Ovary (tissue), 10 donors: ENCODE measurements at regions of chr10 and their contacts with region 1.

Region 1: GRCh38 chr10:16828114-16828568 is 10.9 kb upstream of the RSU1 start:
- DNase-seq: peak; percentile 54 to 73 (median 62)
- H3K4me3 ChIP-seq: no peak overlapping the region
- H3K27ac ChIP-seq: no peak overlapping the region
- H3K4me1 ChIP-seq: peaks cover 4% of the 10 kb centered on the region
- H3K27me3 ChIP-seq: no peaks in the 10 kb centered on the region
- CTCF ChIP-seq: peak; percentile 35 to 61 (median 44)
- EP300 ChIP-seq: no peak
- POLR2A ChIP-seq: no peak

Region 2: GRCh38 chr10:17249820-17250219 is 421.7 kb after region 1 on chr10:
- intact Hi-C with region 1: loop called (anchors 5 kb)
- DNase-seq: no peak
- H3K4me3 ChIP-seq: no peak overlapping the region
- H3K27ac ChIP-seq: no peak overlapping the region
- H3K4me1 ChIP-seq: no peaks in the 10 kb centered on the region
- H3K27me3 ChIP-seq: no peaks in the 10 kb centered on the region
- CTCF ChIP-seq: peak in 1 of 3 donors; percentile 20
- EP300 ChIP-seq: no peak
- POLR2A ChIP-seq: no peak

Region 3: GRCh38 chr10:17257466-17258321 is 429.6 kb after region 1 on chr10:
- intact Hi-C with region 1: loop called (anchors 5 kb)
- DNase-seq: peak in 4 of 5 donors; percentile 40 to 74 (median 46)
- H3K4me3 ChIP-seq: no peak overlapping the region
- H3K27ac ChIP-seq: peak overlapping the region in 1 of 2 donors; percentile 65
- H3K4me1 ChIP-seq: no peaks in the 10 kb centered on the region
- H3K27me3 ChIP-seq: no peaks in the 10 kb centered on the region
- CTCF ChIP-seq: peak; percentile 70 to 82 (median 77)
- EP300 ChIP-seq: no peak
- POLR2A ChIP-seq: no peak

Region 4: GRCh38 chr10:17430647-17431355 is 602.7 kb after region 1 on chr10:
- intact Hi-C with region 1: loop called in 1 of 4 experiments (anchors 10 kb)
- DNase-seq: peak; percentile 79 to 89 (median 87)
- H3K4me3 ChIP-seq: no peak overlapping the region
- H3K27ac ChIP-seq: no peak overlapping the region
- H3K4me1 ChIP-seq: peaks cover 1% of the 10 kb centered on the region
- H3K27me3 ChIP-seq: no peaks in the 10 kb centered on the region
- CTCF ChIP-seq: peak; percentile 66 to 75 (median 75)
- EP300 ChIP-seq: no peak
- POLR2A ChIP-seq: no peak

Region 5: GRCh38 chr10:18303851-18304801 is 1476.0 kb after region 1 on chr10:
- intact Hi-C with region 1: no loop called
- DNase-seq: peak; percentile 49 to 72 (median 60)
- H3K4me3 ChIP-seq: no peak overlapping the region
- H3K27ac ChIP-seq: peak overlapping the region in 1 of 2 donors; percentile 47
- H3K4me1 ChIP-seq: peaks cover 9% of the 10 kb centered on the region
- H3K27me3 ChIP-seq: no peaks in the 10 kb centered on the region
- CTCF ChIP-seq: no peak
- EP300 ChIP-seq: no peak
- POLR2A ChIP-seq: no peak